ENCODE measurements at regions of chr11 and their contacts with region 1.

Region 1: GRCh38 chr11:2992234-2992996 is at the start of gene NAP1L4:
- DNase-seq: peak; percentile 95
- H3K4me3 ChIP-seq: peak within 1 kb of the TSS; percentile 67 to 80 (median 80)
- H3K27ac ChIP-seq: peak within 1 kb of the TSS; percentile 86
- H3K4me1 ChIP-seq: peaks cover 32% of the 10 kb centered on the region
- H3K27me3 ChIP-seq: no peaks in the 10 kb centered on the region
- CTCF ChIP-seq: no peak
- total RNA-seq, gene NAP1L4: 89.2 to 153 TPM

Region 2: DNA sequence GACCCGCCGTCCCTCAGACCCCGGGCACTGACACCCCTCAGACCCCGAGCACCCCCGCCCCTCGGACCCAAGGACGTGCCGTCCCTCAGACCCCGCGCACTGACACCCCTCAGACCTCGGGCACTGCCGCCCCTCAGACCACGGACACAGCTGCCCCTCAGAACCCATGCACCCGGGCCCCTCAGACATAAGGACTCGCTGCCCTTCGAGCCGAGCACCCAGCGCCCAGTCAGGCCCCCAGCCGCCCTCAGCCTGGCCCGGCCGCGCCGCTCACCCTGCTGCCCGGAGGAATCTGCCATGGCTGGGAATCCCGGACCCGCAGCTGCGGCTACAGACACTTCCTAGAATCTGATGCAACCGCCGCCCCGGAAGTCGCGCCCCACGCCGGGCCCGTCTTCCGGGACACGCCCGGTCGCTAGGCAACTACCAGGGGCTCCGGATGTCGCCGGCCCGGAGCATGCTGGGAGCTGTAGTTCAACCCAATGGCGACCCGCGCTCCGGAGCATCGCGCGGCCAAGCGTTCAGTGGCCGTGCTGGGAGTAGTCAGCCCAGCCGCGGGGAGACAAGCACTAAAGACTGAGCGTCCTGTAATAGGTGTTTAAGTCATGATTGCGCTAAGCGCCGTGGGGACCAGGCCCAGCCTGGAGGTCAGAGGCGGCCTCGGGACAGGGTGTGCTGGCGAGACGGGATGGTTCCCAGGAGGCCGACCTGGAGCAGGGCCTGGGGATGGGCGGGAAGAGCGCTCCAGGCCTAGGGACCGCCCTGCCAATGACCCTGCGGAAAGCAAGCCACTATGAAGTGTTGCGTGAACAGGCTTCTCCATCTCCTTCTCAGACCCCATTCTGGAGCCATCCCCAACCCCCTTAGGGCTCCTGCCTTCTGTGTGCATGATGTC is 64.9 kb after region 1 on chr11 and contains the start of gene CARS1:
- CTCF ChIA-PET with region 1: no interaction called
- dilution Hi-C with region 1: no loop called
- in situ Hi-C with region 1: no loop called
- intact Hi-C with region 1: loop called (anchors 5 kb)
- DNase-seq: peak; percentile 94
- H3K4me3 ChIP-seq: peak within 1 kb of the TSS; percentile 97 to 100 (median 99)
- H3K27ac ChIP-seq: peak within 1 kb of the TSS; percentile 77
- H3K4me1 ChIP-seq: peaks cover 20% of the 10 kb centered on the region
- H3K27me3 ChIP-seq: no peaks in the 10 kb centered on the region
- CTCF ChIP-seq: no peak
- total RNA-seq, gene CARS1: 112 to 125 TPM

Region 3: DNA sequence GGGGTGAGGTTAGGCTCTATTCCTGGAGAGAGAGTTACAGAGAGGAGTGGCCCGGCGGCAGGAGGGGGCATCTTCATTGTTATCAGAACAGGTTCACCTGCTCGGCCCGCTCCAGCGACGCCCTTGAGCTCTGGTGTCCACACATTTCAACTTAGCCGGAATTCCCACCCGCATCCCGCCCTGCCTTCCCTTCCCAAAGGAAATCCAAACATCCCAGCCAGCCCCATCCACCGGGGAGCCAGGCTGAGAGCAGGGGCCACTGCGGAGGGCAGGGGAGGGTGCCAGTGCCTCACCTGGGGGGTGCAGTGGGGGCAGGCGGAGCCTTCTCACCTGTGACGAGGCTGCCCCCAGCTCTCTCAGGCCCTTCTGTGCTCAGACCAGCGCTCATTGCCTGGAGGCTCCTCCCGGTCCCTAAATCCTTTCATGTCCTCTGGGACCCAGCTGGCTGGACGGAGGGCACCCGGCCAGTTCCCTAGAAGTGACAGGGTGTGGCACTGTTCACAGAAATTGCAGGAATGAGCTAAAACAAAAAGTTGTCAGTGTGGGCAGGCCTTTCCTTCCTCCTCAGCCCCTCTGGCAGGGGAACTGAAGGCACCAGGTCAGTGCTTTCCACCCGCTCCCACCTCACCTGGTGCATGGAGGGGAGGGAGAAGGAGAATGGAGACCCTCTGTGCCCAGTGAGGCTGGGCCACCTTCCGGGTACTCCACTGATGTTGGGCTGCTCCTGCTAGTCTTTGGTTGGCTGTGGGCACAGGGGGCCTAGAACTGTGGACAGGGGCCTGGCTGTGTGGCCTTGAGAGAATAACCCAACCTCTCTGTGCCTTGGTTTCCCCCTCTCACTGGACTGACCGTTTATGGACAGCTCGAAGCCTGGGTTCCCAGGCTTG is 228.3 kb after region 1 on chr11:
- CTCF ChIA-PET with region 1: no interaction called
- dilution Hi-C with region 1: no loop called
- in situ Hi-C with region 1: no loop called
- intact Hi-C with region 1: no loop called
- DNase-seq: no peak
- H3K4me3 ChIP-seq: no peak overlapping the region
- H3K27ac ChIP-seq: no peak overlapping the region
- H3K4me1 ChIP-seq: no peaks in the 10 kb centered on the region
- H3K27me3 ChIP-seq: peaks cover 3% of the 10 kb centered on the region
- CTCF ChIP-seq: no peak